Activated CD4-positive, alpha-beta T cell treated with anti-CD3 and anti-CD28 coated beads for 36 hours (primary cell): ENCODE measurements at regions of chr6 and their contacts with region 1.

Region 1: GRCh38 chr6:6918216-6918983 is 189.4 kb upstream of the RREB1 start:
- DNase-seq: peak; percentile 91
- ATAC-seq: peak; percentile 97
- H3K4me3 Mint-ChIP-seq: no peak overlapping the region
- H3K27ac Mint-ChIP-seq: no peak overlapping the region
- H3K4me1 Mint-ChIP-seq: peaks cover 31% of the 10 kb centered on the region
- H3K27me3 Mint-ChIP-seq: peaks cover 32% of the 10 kb centered on the region

Region 2: DNA sequence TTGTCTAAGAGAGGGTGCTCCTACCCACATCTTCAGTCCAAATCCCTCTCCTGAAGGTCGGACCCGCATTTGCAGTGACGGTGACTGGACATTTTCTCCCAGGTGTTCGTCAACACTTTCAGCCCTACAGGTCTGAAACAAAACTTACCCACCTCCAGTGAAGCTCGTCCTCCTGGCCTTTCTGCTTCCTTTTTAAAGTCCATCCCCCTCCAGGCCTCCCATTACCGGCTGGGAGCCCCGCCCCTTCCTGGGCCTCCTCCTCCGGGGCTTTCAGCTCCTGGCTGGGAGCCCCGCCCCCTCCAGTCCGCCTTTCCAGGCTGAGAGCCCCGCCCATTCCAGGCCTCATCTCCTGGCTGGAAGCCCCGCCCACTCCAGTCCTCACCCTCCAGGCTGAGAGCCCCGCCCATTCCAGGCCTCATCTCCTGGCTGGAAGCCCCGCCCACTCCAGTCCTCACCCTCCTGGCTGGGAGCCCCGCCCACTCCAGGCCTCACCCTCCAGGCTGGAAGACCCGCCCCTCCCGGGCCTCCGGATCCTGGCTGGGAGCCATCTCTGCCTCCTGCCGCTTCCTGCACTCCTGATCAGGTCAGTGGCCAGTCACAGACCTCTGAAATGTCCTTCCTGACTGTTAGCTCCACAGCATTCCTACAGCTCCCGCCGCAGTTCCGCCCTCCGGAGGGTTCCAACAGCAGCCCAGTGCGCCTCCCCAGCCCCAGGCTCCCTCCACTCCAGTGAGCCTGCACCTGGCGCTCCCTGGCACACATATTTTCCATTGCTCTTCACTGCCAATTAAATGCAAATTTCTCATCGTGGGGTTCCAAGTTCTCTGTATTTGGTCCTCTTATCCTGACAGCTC is 231.4 kb before region 1 on chr6:
- CTCF ChIA-PET with region 1: no interaction called
- POLR2A ChIA-PET with region 1: no interaction called
- intact Hi-C with region 1: loop called in 1 of 2 experiments (anchors 1 kb)
- DNase-seq: peak; percentile 45
- ATAC-seq: no peak
- H3K4me3 Mint-ChIP-seq: no peak overlapping the region
- H3K27ac Mint-ChIP-seq: no peak overlapping the region
- H3K4me1 Mint-ChIP-seq: peaks cover 30% of the 10 kb centered on the region
- H3K27me3 Mint-ChIP-seq: no peaks in the 10 kb centered on the region

Region 3: DNA sequence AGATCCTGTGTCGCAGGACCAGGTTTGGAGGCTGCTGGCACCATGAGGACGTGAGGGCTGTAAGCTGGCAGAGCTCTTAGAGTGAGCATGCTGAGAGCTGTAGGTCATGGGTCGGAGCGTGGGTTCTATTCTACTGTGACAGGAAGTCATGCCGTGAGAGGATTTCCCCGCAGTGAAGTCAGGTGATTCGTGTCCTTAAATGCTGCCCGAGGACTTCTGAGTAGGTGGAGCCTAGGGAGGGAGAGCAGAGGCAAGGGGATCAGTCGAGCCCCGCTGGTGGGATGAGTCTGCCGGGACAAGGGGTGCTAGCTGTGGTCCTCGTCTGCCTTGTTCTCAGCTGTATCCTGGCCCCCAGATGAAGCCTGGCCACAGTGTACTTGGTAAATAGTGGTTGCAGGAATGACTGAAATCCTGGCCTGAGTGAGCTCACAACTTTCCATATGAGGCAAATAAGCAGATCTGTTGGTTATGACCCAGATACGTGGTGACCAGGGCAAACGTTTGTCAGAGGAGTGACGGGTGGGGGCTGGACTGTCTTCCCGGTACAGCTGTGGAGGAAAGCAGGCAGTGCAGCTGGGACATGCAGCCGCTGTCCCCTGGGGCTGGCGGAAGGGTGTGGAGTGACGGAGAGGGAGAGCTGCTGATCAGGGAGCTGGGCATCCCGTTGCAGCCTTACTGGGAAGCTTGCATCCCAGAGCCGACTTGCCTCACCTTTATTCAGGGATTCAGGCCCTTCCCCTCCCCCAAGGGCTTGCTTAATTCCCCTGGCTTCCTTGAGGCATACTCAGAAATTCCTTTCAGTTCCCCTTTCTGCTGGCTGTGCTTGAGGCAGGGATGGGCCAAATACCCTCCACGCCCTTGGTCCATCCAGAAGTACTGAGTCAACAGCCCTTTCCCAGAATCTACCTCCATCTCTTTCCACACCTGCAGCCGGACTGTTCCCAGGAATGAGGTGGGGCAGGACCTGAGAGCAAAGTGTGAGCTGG is 61.6 kb before region 1 on chr6:
- CTCF ChIA-PET with region 1: no interaction called
- POLR2A ChIA-PET with region 1: no interaction called
- intact Hi-C with region 1: loop called (anchors 1 kb)
- DNase-seq: peak; percentile 84
- ATAC-seq: peak; percentile 94
- H3K4me3 Mint-ChIP-seq: peak overlapping the region; percentile 56
- H3K27ac Mint-ChIP-seq: peak overlapping the region; percentile 92
- H3K4me1 Mint-ChIP-seq: peaks cover 33% of the 10 kb centered on the region
- H3K27me3 Mint-ChIP-seq: peaks cover 2% of the 10 kb centered on the region

Region 4: GRCh38 chr6:7107578-7108195 is 189.3 kb after region 1 on chr6 and contains the start of gene RREB1:
- CTCF ChIA-PET with region 1: no interaction called
- POLR2A ChIA-PET with region 1: no interaction called
- intact Hi-C with region 1: loop called in 1 of 2 experiments (anchors 2 kb)
- DNase-seq: peak; percentile 77
- ATAC-seq: peak; percentile 54
- H3K4me3 Mint-ChIP-seq: peak within 1 kb of the TSS; percentile 94
- H3K27ac Mint-ChIP-seq: peak within 1 kb of the TSS; percentile 93
- H3K4me1 Mint-ChIP-seq: peaks cover 40% of the 10 kb centered on the region
- H3K27me3 Mint-ChIP-seq: no peaks in the 10 kb centered on the region
- total RNA-seq, gene RREB1: 14.7 to 18.1 TPM

Region 5: DNA sequence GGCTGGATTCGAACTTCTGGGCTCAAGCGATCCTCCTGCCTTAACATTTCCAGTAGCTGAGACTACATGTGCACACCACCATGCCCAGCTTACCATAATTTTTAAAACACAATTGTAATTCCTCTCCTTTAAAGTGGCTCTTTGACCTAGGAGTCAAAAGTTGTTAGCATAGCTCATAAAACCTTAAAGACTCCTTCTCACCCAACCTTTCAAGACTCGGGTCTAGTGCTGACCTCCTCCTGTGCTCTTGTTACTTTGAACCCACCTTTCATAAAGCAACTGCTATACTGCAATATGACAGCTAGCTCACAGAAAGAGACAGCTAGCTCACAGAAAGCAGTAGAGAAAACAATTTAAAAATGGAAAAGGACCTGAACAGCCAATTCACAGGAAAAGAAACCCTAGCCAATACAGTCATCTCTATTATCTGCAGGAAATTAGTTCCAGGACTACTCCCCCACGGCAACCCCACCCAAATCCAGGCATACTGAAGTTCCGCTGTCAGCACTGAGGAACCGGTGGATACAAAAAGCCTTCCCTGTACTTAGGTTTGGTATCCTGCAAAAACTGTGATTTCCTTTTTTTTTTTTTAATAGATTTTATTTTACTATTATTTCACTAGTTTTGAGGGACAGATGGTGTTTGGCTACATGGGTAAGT is 374.3 kb after region 1 on chr6:
- CTCF ChIA-PET with region 1: no interaction called
- POLR2A ChIA-PET with region 1: interaction called, 11 read pairs
- intact Hi-C with region 1: no loop called
- DNase-seq: no peak
- ATAC-seq: no peak
- H3K4me3 Mint-ChIP-seq: no peak overlapping the region
- H3K27ac Mint-ChIP-seq: no peak overlapping the region
- H3K4me1 Mint-ChIP-seq: peaks cover 7% of the 10 kb centered on the region
- H3K27me3 Mint-ChIP-seq: no peaks in the 10 kb centered on the region